A673 (cell line): ENCODE measurements at regions of chr13 and their contacts with region 1.

Region 1: DNA sequence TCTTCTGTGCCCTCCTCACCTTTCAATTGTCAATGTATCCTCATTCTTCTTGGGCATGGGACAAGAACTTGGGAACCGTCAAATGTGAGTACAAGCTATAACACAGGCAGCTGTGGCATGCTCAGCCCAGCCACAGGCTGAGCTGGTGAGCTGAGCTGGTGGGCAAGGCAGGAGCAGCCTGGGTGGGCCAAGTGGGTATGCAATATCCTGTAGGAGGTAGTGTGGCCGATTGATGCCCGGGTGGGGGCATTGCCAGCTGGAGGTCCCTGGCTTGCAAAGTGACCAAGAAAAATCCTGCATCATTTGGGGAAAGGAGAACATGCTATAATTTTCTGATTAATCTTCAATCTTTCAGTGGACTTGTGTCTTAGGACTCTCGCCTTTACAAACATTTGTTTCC is 507.2 kb upstream of the SLC10A2 start:
- DNase-seq: no peak
- H3K4me3 ChIP-seq: no peak overlapping the region
- H3K27ac ChIP-seq: no peak overlapping the region
- H3K4me1 ChIP-seq: no peaks in the 10 kb centered on the region
- H3K27me3 ChIP-seq: no peaks in the 10 kb centered on the region
- CTCF ChIP-seq: no peak

Region 2: GRCh38 chr13:103638706-103639105 is 65.3 kb after region 1 on chr13:
- CTCF ChIA-PET with region 1: no interaction called
- POLR2A ChIA-PET with region 1: no interaction called
- intact Hi-C with region 1: loop called (anchors 2 kb)
- DNase-seq: no peak
- H3K4me3 ChIP-seq: no peak overlapping the region
- H3K27ac ChIP-seq: no peak overlapping the region
- H3K4me1 ChIP-seq: no peaks in the 10 kb centered on the region
- H3K27me3 ChIP-seq: peaks cover 3% of the 10 kb centered on the region
- CTCF ChIP-seq: no peak